ENCODE measurements at regions of chr19 and their contacts with region 1.

Region 1: DNA sequence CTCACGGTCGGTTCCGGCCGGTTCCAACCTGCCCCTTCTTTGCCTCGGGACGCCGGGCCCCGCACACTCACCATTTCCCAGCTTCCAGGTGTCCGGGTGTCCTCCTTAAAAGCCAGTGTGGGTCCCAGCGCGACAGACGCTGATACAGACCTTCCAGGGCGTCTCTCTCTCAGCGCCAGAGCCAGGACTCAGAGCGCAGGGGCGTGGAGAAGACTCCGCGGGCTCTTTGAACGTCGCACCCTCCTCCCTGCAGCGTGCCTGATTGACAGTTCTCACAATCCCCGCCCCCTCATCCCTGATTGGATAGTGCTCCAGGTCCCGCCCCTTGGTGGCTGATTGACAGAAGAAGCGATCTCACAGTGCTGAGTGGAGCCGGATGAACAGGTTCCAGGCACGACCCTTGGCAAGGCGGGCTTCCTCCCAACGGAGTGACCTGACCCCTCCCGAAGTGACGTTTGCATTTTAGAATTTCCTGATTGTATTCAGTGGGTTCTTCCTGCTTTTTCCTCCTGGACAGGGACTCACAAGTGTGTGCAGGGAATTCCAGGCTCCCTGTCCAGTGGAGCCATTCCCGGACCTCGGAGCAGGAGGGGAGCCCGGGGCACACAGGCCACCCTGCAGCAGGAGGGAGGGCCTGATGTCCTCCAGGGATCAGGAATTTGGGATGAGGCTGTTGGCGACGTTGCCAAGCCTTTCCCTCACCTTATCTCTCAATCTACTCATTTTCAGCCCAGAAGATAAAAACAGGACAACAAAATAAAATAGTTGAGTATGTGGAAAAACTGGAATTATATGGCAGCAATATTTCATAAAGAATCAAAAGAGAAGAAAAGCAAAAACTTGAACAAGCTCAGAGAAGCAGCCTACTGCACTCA is at the start of gene ZNF823:
- DNase-seq: peak; percentile 98 to 99
- ATAC-seq: peak; percentile 99
- H3K4me3 ChIP-seq: peak within 1 kb of the TSS; percentile 76 to 90
- H3K27ac ChIP-seq: peak within 1 kb of the TSS in 1 of 2 donors; percentile 87
- H3K4me1 ChIP-seq: no peaks in the 10 kb centered on the region
- H3K27me3 ChIP-seq: no peaks in the 10 kb centered on the region
- total RNA-seq, gene ZNF823: 5.1 to 8.7 TPM

Region 2: GRCh38 chr19:11766597-11767591 is 27.9 kb after region 1 on chr19 and contains the start of gene ZNF441:
- intact Hi-C with region 1: loop called in 1 of 2 experiments (anchors 2 kb)
- DNase-seq: peak; percentile 99
- ATAC-seq: peak; percentile 99
- H3K4me3 ChIP-seq: peak within 1 kb of the TSS; percentile 82 to 94
- H3K27ac ChIP-seq: peak within 1 kb of the TSS; percentile 23 to 81
- H3K4me1 ChIP-seq: peaks cover 0 to 3% of the 10 kb centered on the region in 2 donors
- H3K27me3 ChIP-seq: no peaks in the 10 kb centered on the region
- total RNA-seq, gene ZNF441: 9.5 to 13.2 TPM

Region 3: DNA sequence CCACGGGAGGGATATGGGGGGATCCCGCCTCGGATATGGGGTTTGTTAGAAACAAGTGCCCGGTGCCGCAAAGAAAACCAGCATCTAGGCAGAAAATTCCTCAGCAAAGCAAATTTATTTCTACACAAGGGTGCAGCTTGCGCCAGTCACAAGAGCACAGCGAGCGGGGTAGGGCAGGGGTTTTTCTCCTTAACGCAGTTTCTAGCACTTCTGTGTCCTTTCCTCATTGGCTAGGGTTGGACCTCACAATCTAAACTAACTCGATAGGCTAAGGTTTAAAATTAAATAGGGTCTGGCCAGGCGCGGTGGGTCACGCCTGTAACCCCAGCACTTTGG is 75.7 kb after region 1 on chr19:
- intact Hi-C with region 1: no loop called
- DNase-seq: no peak
- ATAC-seq: peak; percentile 12
- H3K4me3 ChIP-seq: peak overlapping the region; percentile 46 to 88
- H3K27ac ChIP-seq: peak overlapping the region; percentile 61 to 62
- H3K4me1 ChIP-seq: no peaks in the 10 kb centered on the region
- H3K27me3 ChIP-seq: no peaks in the 10 kb centered on the region

Region 4: DNA sequence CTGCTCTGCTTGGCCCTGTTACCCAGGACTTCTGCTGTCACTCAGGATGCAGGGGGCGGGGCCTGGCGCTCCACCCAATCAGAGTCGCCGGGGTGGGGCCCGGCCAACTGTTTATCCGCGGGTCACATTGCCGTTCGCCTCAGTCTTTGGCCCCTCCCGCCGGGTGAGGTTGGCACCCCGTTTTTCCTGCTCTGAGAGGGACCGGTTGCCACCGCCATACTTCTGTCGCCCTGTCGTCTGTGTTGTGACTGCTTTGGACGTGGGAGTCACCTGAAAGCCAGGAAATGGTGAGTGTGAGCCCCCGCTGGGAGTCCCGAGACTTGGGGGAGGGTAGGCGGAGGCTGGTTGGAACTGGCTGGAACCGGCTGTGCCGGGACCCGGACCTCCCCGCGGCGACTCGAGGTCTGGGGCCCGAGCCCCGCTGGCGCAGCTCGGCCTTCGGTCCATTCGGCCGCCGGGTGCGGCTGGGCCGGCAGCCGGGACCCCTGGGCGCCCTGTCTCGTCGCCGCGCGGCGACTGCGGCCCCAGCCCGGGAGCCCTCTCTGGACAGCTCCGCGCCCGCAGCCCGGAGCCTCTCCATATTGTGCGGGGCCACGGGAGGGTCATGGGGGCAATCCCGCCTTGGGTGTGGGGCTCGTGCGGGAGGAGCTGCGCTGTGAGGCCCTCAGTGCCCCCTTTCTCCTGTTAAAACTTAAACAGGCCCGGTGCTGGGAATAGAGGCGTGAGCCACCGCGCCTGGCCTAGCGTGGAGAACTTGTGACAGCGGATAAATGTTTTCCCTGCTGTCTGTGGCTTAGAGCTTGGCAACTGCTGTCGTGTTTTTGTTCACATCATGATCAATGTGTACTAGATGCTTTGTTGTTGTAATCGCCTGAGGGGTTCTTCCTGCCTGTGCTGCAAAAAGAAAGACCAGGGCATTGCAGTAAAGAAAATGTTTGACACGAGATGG is 325.9 kb after region 1 on chr19 and contains the start of gene ZNF844:
- intact Hi-C with region 1: no loop called
- DNase-seq: peak; percentile 98
- ATAC-seq: peak; percentile 99
- H3K4me3 ChIP-seq: peak within 1 kb of the TSS; percentile 87 to 89
- H3K27ac ChIP-seq: peak within 1 kb of the TSS; percentile 58 to 87
- H3K4me1 ChIP-seq: no peaks in the 10 kb centered on the region
- H3K27me3 ChIP-seq: no peaks in the 10 kb centered on the region
- total RNA-seq, gene ZNF844: 7.8 to 14.3 TPM